Transverse colon (tissue), 4 donors: ENCODE measurements at regions of chr18 and their contacts with region 1.

Region 1: GRCh38 chr18:26642440-26643348 is 94.3 kb upstream of the KCTD1 start:
- DNase-seq: no peak
- H3K4me3 ChIP-seq: no peak overlapping the region
- H3K27ac ChIP-seq: no peak overlapping the region
- H3K4me1 ChIP-seq: no peaks in the 10 kb centered on the region
- H3K27me3 ChIP-seq: no peaks in the 10 kb centered on the region
- CTCF ChIP-seq: no peak
- EP300 ChIP-seq: no peak
- POLR2A ChIP-seq: no peak

Region 2: DNA sequence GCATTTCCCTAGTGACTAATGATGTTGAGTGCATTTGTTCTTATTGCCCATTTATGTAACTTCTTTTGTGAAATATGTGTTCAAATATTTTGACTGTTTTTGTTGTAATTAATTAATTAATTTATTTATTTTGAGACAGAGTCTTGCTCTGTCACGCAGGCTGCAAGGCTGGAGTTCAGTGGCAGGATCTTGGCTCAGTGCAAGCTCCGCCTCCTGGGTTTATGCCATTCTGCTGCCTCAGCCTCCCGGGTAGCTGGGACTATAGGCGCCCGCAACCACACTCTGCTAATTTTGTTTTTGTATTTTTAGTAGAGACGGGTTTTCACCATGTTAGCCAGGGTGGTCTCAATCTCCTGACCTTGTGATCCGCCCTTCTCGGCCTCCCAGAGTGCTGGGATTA is 344.6 kb before region 1 on chr18:
- in situ Hi-C with region 1: no loop called
- intact Hi-C with region 1: no loop called
- DNase-seq: no peak
- H3K4me3 ChIP-seq: no peak overlapping the region
- H3K27ac ChIP-seq: no peak overlapping the region
- H3K4me1 ChIP-seq: no peaks in the 10 kb centered on the region
- H3K27me3 ChIP-seq: no peaks in the 10 kb centered on the region
- CTCF ChIP-seq: no peak
- EP300 ChIP-seq: no peak
- POLR2A ChIP-seq: no peak

Region 3: GRCh38 chr18:26405190-26405801 is 237.4 kb before region 1 on chr18:
- in situ Hi-C with region 1: loop called in 1 of 4 experiments (anchors 10 kb)
- intact Hi-C with region 1: no loop called
- DNase-seq: peak; percentile 15
- H3K4me3 ChIP-seq: no peak overlapping the region
- H3K27ac ChIP-seq: no peak overlapping the region
- H3K4me1 ChIP-seq: no peaks in the 10 kb centered on the region
- H3K27me3 ChIP-seq: no peaks in the 10 kb centered on the region
- CTCF ChIP-seq: peak in 1 of 5 experiments; percentile 11
- EP300 ChIP-seq: no peak
- POLR2A ChIP-seq: no peak

Region 4: DNA sequence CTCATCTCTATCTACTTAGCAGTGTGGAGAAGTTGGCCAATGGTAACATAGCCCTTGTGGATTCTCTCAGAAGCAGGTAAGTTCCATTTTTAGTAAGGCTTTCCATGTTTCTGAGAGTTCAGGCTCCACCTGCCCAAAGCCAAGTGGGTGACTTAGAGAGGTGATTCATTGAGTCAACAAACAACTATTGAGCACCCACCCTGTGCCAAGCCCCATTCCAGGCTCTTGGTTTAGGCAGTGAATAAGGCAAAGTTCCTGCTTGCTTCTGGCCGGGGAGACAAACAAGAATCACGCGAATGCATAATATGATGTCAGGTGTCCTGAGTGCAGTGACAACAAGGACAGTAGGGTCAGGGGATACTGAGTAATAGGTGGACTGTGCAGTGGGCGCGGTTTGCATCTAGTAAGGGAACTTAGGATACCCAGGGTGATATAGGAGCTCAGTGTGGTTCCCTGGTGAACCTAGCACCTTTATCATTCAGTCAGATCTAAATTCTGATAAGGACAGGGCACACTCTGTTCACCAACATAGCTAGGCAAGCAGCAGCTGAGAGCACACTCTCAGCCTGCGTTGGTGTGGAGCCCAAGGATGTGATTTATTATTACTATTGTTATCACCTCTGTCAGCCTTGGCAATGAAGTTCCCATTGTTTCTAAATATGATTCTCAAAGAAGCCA is 62.6 kb before region 1 on chr18:
- in situ Hi-C with region 1: no loop called
- intact Hi-C with region 1: no loop called
- DNase-seq: peak; percentile 27
- H3K4me3 ChIP-seq: no peak overlapping the region
- H3K27ac ChIP-seq: no peak overlapping the region
- H3K4me1 ChIP-seq: peaks cover 0 to 11% (median 7%) of the 10 kb centered on the region in 4 donors
- H3K27me3 ChIP-seq: peaks cover 23% of the 10 kb centered on the region
- CTCF ChIP-seq: no peak
- EP300 ChIP-seq: no peak
- POLR2A ChIP-seq: no peak